Activated T-helper 1 cell treated with anti-CD3 and anti-CD28 coated beads, Interleukin-12 subunit alpha, Interleukin-12 subunit beta, Interleukin-2, Interleukin-4 antibody, amounts not matched to agents 30 ng/mL and 10 ng/mL and 1 ng/mL, durations not matched to agents 14 hours and 24 hours and 36 hours (primary cell): ENCODE measurements at regions of chr12 and their contacts with region 1.

Region 1: DNA sequence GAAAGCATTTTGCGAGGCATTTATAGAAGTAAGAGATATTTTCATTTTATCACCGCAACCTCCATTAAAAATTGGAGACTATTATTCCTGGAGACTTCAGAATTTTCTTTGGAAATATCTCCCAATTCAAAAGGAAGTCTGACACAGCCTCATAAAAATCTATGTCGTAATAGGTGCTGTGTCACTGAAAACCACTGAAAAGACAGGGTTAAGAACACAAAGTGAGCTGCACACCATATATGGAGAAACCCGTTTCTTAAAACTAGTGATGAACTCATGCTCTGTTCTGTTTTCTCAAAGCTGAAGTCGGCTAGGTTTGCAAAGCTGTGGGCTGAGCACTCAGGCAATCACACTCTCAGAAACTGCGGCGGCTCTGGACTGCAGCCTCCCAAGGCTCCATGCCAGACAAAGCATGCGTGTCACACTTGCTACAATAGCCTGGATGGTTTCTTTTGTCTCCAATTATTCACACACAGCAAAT is at the start of gene GLIPR1:
- DNase-seq: peak; percentile 70
- H3K4me3 Mint-ChIP-seq: peak within 1 kb of the TSS; percentile 89
- H3K27ac Mint-ChIP-seq: peak within 1 kb of the TSS; percentile 98
- H3K4me1 Mint-ChIP-seq: peaks cover 83% of the 10 kb centered on the region
- H3K27me3 Mint-ChIP-seq: peaks cover 2% of the 10 kb centered on the region
- total RNA-seq, gene GLIPR1: 7.3 and 7.6 TPM in 2 replicates

Region 2: DNA sequence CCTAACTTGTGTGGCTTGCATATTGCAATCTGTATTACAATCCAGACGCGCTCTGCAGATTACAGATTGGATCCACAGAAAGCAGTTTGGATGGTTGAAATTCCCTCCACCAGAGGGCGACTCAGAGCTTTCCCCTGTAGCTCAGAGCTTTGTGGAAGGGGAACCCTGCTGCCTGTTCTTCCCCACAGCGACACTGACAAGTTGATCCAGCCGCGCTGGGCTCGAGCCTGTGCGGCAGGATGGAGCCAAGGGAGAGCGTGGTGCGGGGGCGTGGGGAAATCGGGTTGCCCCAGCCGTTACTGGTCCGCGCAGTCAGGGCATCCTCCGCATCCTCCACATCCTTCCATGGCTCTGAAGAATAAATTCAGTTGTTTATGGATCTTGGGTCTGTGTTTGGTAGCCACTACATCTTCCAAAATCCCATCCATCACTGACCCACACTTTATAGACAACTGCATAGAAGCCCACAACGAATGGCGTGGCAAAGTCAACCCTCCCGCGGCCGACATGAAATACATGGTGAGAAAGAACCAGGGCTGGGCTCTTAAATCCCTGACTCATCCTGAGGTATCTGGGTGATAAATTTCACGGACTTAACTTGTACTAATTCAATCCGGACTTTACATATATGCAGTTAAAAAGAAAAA is 146.0 kb before region 1 on chr12 and contains the start of gene GLIPR1L1:
- intact Hi-C with region 1: loop called (anchors 1 kb)
- DNase-seq: peak; percentile 67
- H3K4me3 Mint-ChIP-seq: peak within 1 kb of the TSS; percentile 70
- H3K27ac Mint-ChIP-seq: no peak within 1 kb of the TSS
- H3K4me1 Mint-ChIP-seq: peaks cover 36% of the 10 kb centered on the region
- H3K27me3 Mint-ChIP-seq: peaks cover 35% of the 10 kb centered on the region
- total RNA-seq, gene GLIPR1L1: not detected in 2 replicates

Region 3: GRCh38 chr12:75414671-75415070 is 65.8 kb before region 1 on chr12:
- intact Hi-C with region 1: no loop called
- DNase-seq: no peak
- H3K4me3 Mint-ChIP-seq: no peak overlapping the region
- H3K27ac Mint-ChIP-seq: no peak overlapping the region
- H3K4me1 Mint-ChIP-seq: no peaks in the 10 kb centered on the region
- H3K27me3 Mint-ChIP-seq: peaks cover 4% of the 10 kb centered on the region

Region 4: DNA sequence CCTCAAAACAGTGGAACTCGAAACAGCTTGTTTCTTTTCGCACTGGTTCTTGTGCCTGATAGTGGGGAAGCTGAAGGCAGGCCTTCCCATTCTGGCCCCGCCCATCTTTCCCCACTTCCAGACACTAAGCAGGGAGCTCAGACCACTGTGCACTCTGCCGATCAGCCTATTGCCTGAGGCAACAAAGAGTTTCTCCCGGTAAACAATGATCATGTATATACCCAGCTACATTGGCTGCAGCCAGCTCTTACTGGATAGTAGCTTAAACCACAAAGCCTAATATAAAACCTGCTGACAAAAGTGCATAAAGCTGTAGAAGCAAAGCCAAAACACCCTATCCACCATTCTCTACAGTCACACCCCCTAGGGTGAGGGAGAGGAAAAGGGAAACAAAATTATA is 24.7 kb before region 1 on chr12:
- intact Hi-C with region 1: loop called (anchors 2 kb)
- DNase-seq: no peak
- H3K4me3 Mint-ChIP-seq: no peak overlapping the region
- H3K27ac Mint-ChIP-seq: no peak overlapping the region
- H3K4me1 Mint-ChIP-seq: peaks cover 35% of the 10 kb centered on the region
- H3K27me3 Mint-ChIP-seq: peaks cover 10% of the 10 kb centered on the region

Region 5: GRCh38 chr12:75571204-75571603 is 90.7 kb after region 1 on chr12:
- intact Hi-C with region 1: no loop called
- DNase-seq: no peak
- H3K4me3 Mint-ChIP-seq: no peak overlapping the region
- H3K27ac Mint-ChIP-seq: no peak overlapping the region
- H3K4me1 Mint-ChIP-seq: no peaks in the 10 kb centered on the region
- H3K27me3 Mint-ChIP-seq: peaks cover 5% of the 10 kb centered on the region

Region 6: DNA sequence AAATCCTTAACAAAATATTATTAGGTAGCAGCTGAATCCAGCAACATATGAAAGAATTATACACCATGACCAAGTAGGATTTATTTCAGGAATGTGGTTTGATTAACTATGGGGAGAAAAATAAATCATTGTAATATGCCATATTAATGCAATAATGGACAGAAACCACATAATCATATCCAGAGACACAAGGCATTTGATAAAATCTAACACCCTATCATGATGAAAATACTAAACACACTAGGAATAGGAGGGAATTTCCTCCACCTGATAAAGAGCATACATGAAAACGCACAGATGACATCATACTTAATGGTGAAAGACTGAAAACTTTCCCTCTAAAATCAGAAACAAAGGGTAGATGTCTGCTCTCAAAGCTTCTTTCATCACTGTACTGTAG is 312.2 kb after region 1 on chr12:
- intact Hi-C with region 1: no loop called
- DNase-seq: no peak
- H3K4me3 Mint-ChIP-seq: no peak overlapping the region
- H3K27ac Mint-ChIP-seq: no peak overlapping the region
- H3K4me1 Mint-ChIP-seq: peaks cover 5% of the 10 kb centered on the region
- H3K27me3 Mint-ChIP-seq: peaks cover 23% of the 10 kb centered on the region

Region 7: GRCh38 chr12:75933101-75933500 is 452.6 kb after region 1 on chr12:
- intact Hi-C with region 1: loop called (anchors 1 kb)
- DNase-seq: no peak
- H3K4me3 Mint-ChIP-seq: no peak overlapping the region
- H3K27ac Mint-ChIP-seq: peak overlapping the region; percentile 89
- H3K4me1 Mint-ChIP-seq: peaks cover 49% of the 10 kb centered on the region
- H3K27me3 Mint-ChIP-seq: peaks cover 4% of the 10 kb centered on the region

Region 8: DNA sequence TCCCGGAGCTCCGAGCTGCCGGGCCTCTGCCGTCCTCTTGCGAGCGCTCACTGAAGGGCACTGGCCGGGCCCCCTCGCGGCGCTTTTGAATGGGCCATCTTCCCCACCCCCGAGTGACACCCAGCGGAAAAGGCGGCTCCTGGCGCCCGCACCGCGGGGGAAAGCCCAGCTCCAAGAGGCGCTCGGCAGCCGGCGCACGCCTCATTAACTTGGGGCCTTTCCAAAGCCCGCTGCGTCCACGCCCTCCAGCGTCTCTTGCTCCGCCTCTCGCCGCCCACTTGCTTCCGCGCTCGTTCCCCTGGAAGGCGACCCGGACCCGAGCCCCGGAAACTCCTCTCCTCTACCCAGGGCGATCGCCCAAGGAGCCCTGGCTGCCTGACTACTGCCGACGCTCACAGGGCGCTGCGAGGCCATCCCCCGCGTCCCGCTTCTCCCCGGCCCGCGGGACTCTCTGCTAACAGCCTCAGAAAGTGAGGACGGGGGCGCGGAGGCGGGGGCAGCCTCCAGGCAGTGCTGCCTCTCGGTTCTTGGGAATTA is 551.1 kb after region 1 on chr12 and contains the start of gene PHLDA1:
- intact Hi-C with region 1: loop called (anchors 1 kb)
- DNase-seq: peak; percentile 95
- H3K4me3 Mint-ChIP-seq: peak within 1 kb of the TSS; percentile 99
- H3K27ac Mint-ChIP-seq: peak within 1 kb of the TSS; percentile 99
- H3K4me1 Mint-ChIP-seq: peaks cover 34% of the 10 kb centered on the region
- H3K27me3 Mint-ChIP-seq: peaks cover 3% of the 10 kb centered on the region
- total RNA-seq, gene PHLDA1: 88.9 and 91.5 TPM in 2 replicates

Region 9: GRCh38 chr12:76348079-76348901 is 867.8 kb after region 1 on chr12 and contains the start of gene BBS10:
- intact Hi-C with region 1: loop called (anchors 1 kb)
- DNase-seq: peak; percentile 81
- H3K4me3 Mint-ChIP-seq: peak within 1 kb of the TSS; percentile 95
- H3K27ac Mint-ChIP-seq: peak within 1 kb of the TSS; percentile 88
- H3K4me1 Mint-ChIP-seq: peaks cover 29% of the 10 kb centered on the region
- H3K27me3 Mint-ChIP-seq: peaks cover 1% of the 10 kb centered on the region
- total RNA-seq, gene BBS10: 3.7 and 4.1 TPM in 2 replicates